Activated naive CD4-positive, alpha-beta T cell treated with anti-CD3 and anti-CD28 coated beads, Interleukin-2, amount 10 ng/mL, durations not matched to agents 7 days and 5 days (primary cell): ENCODE measurements at regions of chr3 and their contacts with region 1.

Region 1: DNA sequence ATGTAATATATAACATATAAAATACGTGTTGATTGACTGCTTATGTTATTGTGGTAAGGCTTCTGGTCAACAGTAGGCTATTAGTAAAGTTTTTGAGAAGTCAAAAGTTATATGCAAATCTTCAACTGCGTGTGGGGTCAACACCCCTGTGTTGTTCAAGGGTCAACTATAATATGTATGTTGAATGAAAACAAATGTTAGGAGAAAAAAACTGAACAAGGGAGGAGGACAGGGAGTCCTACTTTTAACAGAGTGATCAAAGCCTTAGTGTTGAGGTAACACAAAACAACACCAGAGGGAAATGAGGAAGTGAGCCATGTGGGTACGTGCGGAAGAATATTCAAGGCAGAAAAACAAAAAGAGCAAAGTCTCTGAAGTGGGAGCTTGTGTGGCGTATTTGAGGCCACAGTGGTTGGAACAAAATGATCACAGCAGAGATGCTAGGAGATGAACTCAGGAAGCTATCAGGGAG is 62.5 kb downstream of the SFMBT1 start:
- DNase-seq: peak; percentile 80
- H3K4me3 Mint-ChIP-seq: peak overlapping the region; percentile 49
- H3K27ac Mint-ChIP-seq: peak overlapping the region; percentile 89
- H3K4me1 Mint-ChIP-seq: peaks cover 35% of the 10 kb centered on the region
- H3K27me3 Mint-ChIP-seq: no peaks in the 10 kb centered on the region

Region 2: DNA sequence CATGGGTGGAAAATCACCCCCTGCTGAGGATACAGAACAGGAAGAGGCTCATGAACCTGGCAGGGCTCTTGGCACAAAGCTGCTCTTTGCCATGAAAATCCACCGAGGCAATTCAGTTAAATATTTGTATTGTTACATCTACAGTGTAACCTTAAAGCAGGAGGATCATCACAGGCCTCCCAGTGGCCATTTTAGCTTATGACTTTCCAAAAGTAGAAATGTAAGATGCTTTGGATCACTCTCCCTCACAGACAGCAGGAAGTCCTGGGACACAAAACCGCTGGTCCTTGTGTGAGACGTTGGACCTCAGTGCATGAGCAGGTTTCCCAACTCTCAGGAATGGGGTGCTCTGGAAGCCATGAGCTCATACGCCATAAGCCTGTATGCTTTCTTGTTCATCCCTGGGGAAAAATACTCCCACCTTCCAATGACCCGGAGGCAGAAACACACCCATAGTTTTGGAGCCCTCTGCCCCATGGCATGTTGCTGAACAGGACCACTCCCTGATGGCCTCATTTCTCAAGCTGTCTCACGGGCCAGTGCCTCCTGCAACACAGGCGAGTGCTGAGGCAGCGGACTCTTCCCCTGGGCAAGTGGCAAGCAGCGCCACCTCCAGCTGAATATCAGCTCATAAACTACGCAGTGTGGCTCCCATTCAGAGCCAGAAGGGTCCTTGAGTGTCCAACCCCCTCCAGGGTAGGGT is 116.1 kb before region 1 on chr3:
- CTCF ChIA-PET with region 1: no interaction called
- DNase-seq: no peak
- H3K4me3 Mint-ChIP-seq: no peak overlapping the region
- H3K27ac Mint-ChIP-seq: no peak overlapping the region
- H3K4me1 Mint-ChIP-seq: peaks cover 2% of the 10 kb centered on the region
- H3K27me3 Mint-ChIP-seq: no peaks in the 10 kb centered on the region

Region 3: DNA sequence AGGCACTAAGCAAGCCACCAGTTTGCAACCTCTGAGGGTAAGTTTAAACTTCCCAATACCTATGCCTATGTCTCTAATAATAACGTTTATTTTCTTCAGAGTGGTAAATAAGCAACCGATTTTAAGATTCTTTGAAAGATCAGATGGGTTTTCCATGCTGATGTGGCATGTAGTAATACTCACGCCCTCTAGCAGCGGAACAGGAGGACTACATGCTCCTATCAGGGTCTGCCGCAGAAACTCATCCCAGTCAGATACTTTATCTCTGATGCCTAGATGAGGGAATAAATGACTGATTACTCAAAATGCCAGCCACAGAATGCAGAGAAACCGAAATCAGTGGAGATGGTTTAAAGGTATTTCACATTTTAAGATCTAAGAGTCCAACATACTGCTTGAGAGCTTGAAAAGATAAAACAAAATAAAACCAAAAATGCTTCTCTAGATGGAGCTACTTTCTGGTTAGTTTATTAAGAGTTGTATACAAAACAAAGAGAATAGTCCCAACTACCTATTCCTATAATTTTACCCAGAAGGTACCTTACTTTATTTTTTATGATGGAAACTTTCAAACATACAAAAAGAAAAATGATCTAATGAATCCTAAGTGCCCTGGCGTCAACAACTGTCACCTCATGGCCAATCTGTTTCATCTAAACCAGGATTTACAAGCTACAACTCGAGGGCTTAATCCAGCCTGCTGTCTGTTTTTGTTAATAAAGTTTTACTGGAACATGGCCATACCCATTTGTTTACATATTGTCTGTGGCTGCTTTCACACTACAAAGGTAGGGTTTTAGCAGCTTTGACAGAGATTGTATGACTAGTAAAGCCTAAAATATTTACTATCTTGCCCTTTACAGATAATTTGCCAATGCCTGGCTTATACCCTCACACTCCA is 48.5 kb before region 1 on chr3:
- CTCF ChIA-PET with region 1: interaction called, 11 read pairs
- DNase-seq: peak; percentile 65
- H3K4me3 Mint-ChIP-seq: no peak overlapping the region
- H3K27ac Mint-ChIP-seq: no peak overlapping the region
- H3K4me1 Mint-ChIP-seq: peaks cover 12% of the 10 kb centered on the region
- H3K27me3 Mint-ChIP-seq: no peaks in the 10 kb centered on the region